Dorsolateral prefrontal cortex (tissue), 120 donors: ENCODE measurements at regions of chr14 and their contacts with region 1.

Region 1: GRCh38 chr14:99101855-99102461 is 170.0 kb downstream of the BCL11B start:
- DNase-seq: no peak
- H3K4me3 ChIP-seq: no peak overlapping the region
- H3K27ac ChIP-seq: no peak overlapping the region
- H3K27me3 ChIP-seq: no peaks in the 10 kb centered on the region
- CTCF ChIP-seq: no peak

Region 2: DNA sequence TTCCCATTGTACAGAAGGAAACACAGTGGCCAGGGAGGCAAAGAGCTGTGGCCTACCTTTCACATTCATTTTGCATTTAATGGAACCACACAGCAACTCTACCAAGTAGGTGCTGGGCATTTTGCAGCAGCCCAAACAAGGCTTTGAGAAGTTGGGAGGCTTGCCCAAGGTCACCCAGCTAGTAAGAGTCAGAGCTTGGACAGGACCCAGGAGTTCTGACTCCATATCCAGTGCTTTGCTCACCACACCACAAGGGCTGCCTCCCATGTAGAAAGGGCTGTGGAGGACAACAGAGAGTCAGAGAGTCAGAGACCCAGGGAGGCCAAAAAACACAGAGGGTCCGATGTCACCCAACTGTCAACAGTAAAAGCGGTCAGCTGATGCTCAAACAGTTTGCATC is 230.2 kb before region 1 on chr14:
- intact Hi-C with region 1: no loop called
- DNase-seq: no peak
- H3K4me3 ChIP-seq: no peak overlapping the region
- H3K27ac ChIP-seq: no peak overlapping the region
- H3K27me3 ChIP-seq: no peaks in the 10 kb centered on the region
- CTCF ChIP-seq: no peak

Region 3: DNA sequence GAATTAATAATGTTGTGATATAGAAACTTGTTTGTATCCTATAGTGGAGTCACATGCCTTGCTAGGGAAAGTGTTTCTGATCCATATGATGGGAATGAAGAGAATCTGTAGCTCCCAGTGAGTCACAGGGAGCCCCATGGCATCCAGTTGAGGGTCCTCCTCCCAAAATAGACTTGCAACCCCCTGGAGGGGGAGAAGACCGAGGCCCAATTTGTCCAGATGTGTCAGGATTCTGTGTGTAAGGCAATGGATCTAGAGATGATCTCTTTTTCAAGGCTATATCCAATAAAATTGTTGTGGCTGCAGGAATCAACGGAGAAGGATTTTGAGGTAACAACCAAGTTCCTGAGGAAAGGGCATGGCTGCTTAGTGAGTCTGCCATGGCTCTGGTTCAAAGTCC is 48.3 kb after region 1 on chr14:
- intact Hi-C with region 1: loop called in 1 of 2 experiments (anchors 5 kb)
- DNase-seq: peak in 1 of 10 donors; percentile 1
- H3K4me3 ChIP-seq: no peak overlapping the region
- H3K27ac ChIP-seq: no peak overlapping the region
- H3K27me3 ChIP-seq: peaks cover 0 to 23% (median 0%) of the 10 kb centered on the region in 45 donors
- CTCF ChIP-seq: no peak